GM12878 (cell line): ENCODE measurements at regions of chr2 and their contacts with region 1.

Region 1: GRCh38 chr2:38185012-38185491 is 109.1 kb upstream of the CYP1B1 start:
- DNase-seq: peak; percentile 94
- ATAC-seq: peak; percentile 98
- H3K4me3 ChIP-seq: 0 out of 2 replicates have a peak overlapping the region, but pooled peaks have one; percentile 18
- H3K27ac ChIP-seq: peak overlapping the region; percentile 72
- H3K4me1 ChIP-seq: peaks cover 17% of the 10 kb centered on the region
- H3K27me3 ChIP-seq: no peaks in the 10 kb centered on the region
- CTCF ChIP-seq: no peak
- EP300 ChIP-seq: peak; percentile 48 to 65; a peak in 3 of 4 replicates
- POLR2A ChIP-seq: no peak
- RAD21 ChIP-seq: peak; percentile 18; the same call in 1 of the 2 replicates

Region 2: DNA sequence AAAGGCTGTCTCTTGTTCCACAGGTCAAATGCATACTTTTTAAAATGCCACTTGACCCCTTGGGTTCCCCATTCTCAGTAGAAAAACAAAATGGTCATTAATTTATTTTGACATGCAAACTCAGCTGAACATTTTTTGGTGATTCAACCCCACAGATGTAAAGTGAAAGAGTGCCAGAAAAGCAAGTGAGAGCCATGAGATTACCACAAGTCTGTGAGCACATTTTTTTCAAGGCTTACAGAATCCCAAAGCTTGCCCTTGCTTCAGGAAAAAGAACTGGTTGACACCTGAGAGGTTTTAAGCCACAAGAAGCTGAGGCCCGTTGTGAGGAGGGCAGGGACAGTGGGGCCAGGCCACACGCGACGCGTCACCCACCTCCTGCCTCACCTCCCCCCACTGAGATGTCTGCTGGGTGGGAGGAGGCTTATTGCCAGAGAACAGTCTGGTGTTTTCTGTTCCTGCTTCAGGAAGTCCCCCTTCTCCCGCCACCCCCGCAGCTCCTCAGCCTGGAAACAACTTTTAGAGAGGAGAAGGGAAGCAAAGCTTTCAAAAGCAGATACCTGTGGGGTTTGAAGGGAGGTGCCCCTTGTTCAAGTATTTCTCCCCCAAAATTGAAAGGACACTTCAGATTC is 38.7 kb before region 1 on chr2:
- CTCF ChIA-PET with region 1: no interaction called
- POLR2A ChIA-PET with region 1: no interaction called
- RAD21 ChIA-PET with region 1: no interaction called
- SMC1A ChIA-PET with region 1: no interaction called
- in situ Hi-C with region 1: no loop called
- intact Hi-C with region 1: loop called (anchors 1 kb)
- DNase-seq: peak; percentile 71
- ATAC-seq: peak; percentile 91
- H3K4me3 ChIP-seq: no peak overlapping the region; the same call in 1 of the 2 replicates
- H3K27ac ChIP-seq: peak overlapping the region; percentile 89
- H3K4me1 ChIP-seq: peaks cover 31% of the 10 kb centered on the region
- H3K27me3 ChIP-seq: no peaks in the 10 kb centered on the region
- CTCF ChIP-seq: no peak
- EP300 ChIP-seq: no peak
- POLR2A ChIP-seq: no peak; the same call in 1 of the 2 replicates
- RAD21 ChIP-seq: no peak

Region 3: GRCh38 chr2:38164881-38165280 is 20.2 kb before region 1 on chr2:
- CTCF ChIA-PET with region 1: no interaction called
- POLR2A ChIA-PET with region 1: no interaction called
- RAD21 ChIA-PET with region 1: interaction called, 3 read pairs
- SMC1A ChIA-PET with region 1: interaction called, 6 read pairs
- in situ Hi-C with region 1: no loop called
- intact Hi-C with region 1: loop called (anchors 2 kb)
- DNase-seq: peak; percentile 56
- ATAC-seq: peak; percentile 93
- H3K4me3 ChIP-seq: no peak overlapping the region
- H3K27ac ChIP-seq: no peak overlapping the region
- H3K4me1 ChIP-seq: peaks cover 34% of the 10 kb centered on the region
- H3K27me3 ChIP-seq: no peaks in the 10 kb centered on the region; a peak in 1 of 4 replicates
- CTCF ChIP-seq: no peak
- EP300 ChIP-seq: 0 out of 4 replicates have a peak, but pooled peaks of 1 of the 2 experiments have one; percentile 24
- POLR2A ChIP-seq: no peak
- RAD21 ChIP-seq: no peak

Region 4: GRCh38 chr2:38317733-38318132 is 132.7 kb after region 1 on chr2:
- CTCF ChIA-PET with region 1: no interaction called
- POLR2A ChIA-PET with region 1: no interaction called
- RAD21 ChIA-PET with region 1: no interaction called
- SMC1A ChIA-PET with region 1: no interaction called
- in situ Hi-C with region 1: no loop called
- intact Hi-C with region 1: no loop called
- DNase-seq: no peak
- ATAC-seq: no peak
- H3K4me3 ChIP-seq: no peak overlapping the region
- H3K27ac ChIP-seq: no peak overlapping the region
- H3K4me1 ChIP-seq: no peaks in the 10 kb centered on the region
- H3K27me3 ChIP-seq: no peaks in the 10 kb centered on the region
- CTCF ChIP-seq: no peak
- EP300 ChIP-seq: no peak
- POLR2A ChIP-seq: no peak
- RAD21 ChIP-seq: no peak